ENCODE measurements at regions of chr11 and their contacts with region 1.

Region 1: DNA sequence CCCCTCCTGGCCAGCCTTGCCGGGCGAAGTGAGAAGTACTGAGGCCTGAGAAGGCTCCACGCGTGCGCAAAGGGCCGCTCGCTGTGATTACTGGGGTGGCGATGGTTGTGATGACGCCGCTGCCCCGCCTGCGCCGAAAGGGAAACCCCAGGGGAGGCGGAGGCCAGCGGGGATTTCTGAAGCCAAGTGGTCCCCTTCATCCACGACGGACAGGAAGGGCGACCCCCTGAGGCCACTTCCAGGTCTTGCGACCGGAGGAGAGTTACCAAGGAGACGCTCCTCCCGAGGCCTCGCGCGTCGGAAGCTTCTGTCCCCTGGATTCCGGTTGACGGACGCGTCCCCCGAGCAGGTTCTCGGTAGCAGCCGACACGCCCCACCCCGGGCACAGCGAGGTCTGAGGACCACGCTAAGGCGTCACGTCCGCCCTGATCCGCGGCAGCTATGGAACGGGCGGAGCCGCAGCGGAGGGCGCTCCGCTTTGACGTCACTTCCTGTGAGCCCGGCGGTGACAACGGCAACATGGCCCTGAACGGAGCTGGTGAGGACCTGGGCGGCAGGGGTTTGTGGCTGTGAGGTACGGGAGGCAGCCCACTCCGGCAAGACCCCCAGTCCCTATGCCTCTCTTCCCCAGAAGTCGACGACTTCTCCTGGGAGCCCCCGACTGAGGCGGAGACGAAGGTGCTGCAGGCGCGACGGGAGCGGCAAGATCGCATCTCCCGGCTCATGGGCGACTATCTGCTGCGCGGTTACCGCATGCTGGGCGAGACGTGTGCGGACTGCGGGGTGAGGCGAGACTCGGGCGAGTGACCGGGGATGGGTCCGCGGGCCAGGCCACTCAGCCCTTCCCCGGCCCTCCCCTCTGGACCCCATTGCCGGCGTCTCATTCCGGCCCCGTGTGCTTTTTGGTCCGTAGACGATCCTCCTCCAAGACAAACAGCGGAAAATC is at the start of gene ZNRD2:
- DNase-seq: peak; percentile 100
- H3K4me3 Mint-ChIP-seq: peak within 1 kb of the TSS; percentile 97
- H3K27ac Mint-ChIP-seq: peak within 1 kb of the TSS; percentile 99
- H3K4me1 Mint-ChIP-seq: peaks cover 57% of the 10 kb centered on the region
- H3K27me3 Mint-ChIP-seq: no peaks in the 10 kb centered on the region
- total RNA-seq, gene ZNRD2: 83.3 and 83.4 TPM in 2 replicates

Region 2: GRCh38 chr11:65425105-65425970 is 144.9 kb before region 1 on chr11:
- intact Hi-C with region 1: loop called (anchors 2 kb)
- DNase-seq: peak; percentile 93
- H3K4me3 Mint-ChIP-seq: peak overlapping the region; percentile 100
- H3K27ac Mint-ChIP-seq: peak overlapping the region; percentile 100
- H3K4me1 Mint-ChIP-seq: peaks cover 67% of the 10 kb centered on the region
- H3K27me3 Mint-ChIP-seq: peaks cover 7% of the 10 kb centered on the region

Region 3: GRCh38 chr11:65546217-65546958 is 23.9 kb before region 1 on chr11:
- intact Hi-C with region 1: loop called (anchors 1 kb)
- DNase-seq: peak; percentile 100
- H3K4me3 Mint-ChIP-seq: peak overlapping the region; percentile 79
- H3K27ac Mint-ChIP-seq: peak overlapping the region; percentile 83
- H3K4me1 Mint-ChIP-seq: peaks cover 40% of the 10 kb centered on the region
- H3K27me3 Mint-ChIP-seq: no peaks in the 10 kb centered on the region

Region 4: DNA sequence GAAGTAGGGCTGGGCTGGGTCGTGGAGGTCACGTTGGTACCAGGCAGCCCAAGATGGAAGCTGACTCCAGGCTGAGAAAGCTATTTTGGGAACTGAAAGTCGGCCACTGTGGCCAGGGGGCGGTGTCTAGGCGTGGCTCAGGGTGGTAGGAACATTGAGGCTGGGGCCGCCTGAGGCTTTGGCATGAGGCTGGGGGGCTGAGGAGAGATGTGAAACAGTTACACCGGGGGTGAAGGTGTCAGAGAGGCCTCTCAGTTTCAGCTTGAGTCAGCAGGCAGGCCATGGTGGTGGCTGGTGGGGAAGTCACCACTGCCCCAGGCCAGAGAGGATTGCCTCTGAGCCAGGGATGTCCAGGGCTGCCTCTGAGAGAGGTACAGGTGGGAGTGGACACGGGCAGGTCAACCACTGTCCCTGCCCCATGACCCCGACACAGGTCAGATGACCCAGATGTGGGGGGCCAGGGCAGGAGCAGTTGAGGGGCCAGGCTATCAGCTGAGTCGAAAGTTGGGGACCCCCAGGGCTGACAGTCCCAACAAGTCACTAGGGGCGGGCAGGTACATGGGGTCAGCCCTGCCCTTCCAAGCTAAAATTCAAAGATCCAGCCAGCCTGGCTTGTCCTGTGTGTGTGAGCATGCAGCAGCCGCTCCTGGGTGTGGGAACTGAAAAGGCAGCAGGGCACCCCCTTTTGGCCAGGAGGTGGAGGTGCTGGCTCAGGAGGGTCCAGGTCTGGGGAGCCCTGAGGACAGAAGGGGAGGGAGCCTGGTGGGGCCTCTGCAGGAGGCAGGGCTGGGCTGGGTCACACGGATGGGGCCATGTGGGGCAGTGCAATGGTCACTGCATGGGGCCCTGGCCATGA is 18.2 kb after region 1 on chr11:
- intact Hi-C with region 1: loop called (anchors 1 kb)
- DNase-seq: peak; percentile 92
- H3K4me3 Mint-ChIP-seq: peak overlapping the region; percentile 81
- H3K27ac Mint-ChIP-seq: peak overlapping the region; percentile 93
- H3K4me1 Mint-ChIP-seq: peaks cover 36% of the 10 kb centered on the region
- H3K27me3 Mint-ChIP-seq: no peaks in the 10 kb centered on the region

Region 5: DNA sequence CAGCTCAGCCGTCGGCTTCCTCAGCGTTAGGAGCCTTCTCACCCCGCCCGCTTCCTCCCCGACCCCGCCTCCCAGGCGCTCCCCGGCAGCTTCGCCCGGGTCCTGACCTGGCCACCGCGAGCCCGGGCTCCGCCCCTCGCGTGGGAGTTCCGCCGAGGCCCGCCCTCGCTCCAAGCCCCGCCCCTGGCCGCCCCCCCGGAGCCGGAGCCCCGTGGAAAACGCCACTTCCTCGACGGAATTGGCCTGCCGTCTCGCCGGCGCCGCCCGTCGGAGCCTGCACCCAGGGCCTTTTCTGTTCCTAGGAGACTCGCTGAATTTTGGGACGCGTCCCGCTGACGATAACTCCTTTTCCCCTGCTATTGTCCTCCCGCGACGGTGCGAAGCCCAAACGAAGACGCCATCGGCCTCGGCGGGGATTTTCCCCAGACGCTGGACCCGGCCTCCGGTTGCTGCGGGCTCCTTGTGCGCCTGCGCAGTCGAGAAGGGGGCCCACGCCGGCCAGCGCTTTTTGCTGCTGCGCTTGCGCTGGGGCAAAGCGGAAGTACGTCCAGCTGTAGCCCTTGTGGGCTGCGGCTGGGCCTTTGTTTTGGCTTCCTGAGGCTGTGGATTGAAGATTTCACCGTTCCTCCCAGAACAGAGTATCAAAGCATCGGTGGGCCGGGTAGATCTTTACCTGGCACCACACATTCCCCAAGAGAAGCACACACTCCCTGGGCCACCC is 82.4 kb after region 1 on chr11:
- intact Hi-C with region 1: loop called (anchors 5 kb)
- DNase-seq: peak; percentile 99
- H3K4me3 Mint-ChIP-seq: peak overlapping the region; percentile 86
- H3K27ac Mint-ChIP-seq: peak overlapping the region; percentile 94
- H3K4me1 Mint-ChIP-seq: peaks cover 33% of the 10 kb centered on the region
- H3K27me3 Mint-ChIP-seq: no peaks in the 10 kb centered on the region